ENCODE measurements at regions of chr20 and their contacts with region 1.

Region 1: DNA sequence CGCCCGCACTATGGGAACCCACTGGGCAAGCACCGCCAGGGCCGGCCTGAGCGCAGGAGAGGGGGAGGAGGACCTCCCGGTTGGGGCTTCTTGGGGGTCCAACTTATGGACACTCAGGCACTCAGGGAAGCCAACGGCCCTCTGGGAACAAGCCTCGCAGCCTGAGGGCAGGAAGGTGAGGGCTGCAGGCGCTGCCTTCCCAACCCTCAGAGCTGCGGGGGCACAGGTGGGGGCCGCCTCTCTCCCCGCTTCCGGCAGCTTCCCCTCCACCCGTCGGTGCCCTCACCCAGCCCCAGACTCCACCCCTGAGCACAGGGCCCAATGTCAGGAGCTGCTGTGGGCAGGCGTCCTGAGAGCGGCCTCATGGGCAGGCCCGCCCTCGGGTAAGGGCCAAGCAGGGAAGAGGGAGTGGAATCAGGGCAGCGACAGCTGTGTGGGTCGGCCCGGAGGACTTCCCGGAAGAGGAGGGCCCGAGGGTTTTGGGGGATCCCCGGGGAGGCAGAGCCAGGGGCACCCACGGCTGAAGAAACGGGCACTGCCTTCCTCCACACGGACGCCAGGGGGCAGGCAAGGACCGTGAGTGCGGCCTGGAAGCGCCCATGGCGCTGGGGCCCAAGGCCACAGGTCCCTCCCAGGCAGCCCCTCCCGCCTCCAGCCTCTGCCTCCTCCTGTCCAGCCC is 488 bp upstream of the PTK6 start:
- DNase-seq: peak; percentile 99
- H3K4me3 Mint-ChIP-seq: peak overlapping the region; percentile 73
- H3K27ac Mint-ChIP-seq: peak overlapping the region; percentile 92
- H3K4me1 Mint-ChIP-seq: peaks cover 14% of the 10 kb centered on the region
- H3K27me3 Mint-ChIP-seq: no peaks in the 10 kb centered on the region
- CTCF ChIP-seq: peak; percentile 95

Region 2: DNA sequence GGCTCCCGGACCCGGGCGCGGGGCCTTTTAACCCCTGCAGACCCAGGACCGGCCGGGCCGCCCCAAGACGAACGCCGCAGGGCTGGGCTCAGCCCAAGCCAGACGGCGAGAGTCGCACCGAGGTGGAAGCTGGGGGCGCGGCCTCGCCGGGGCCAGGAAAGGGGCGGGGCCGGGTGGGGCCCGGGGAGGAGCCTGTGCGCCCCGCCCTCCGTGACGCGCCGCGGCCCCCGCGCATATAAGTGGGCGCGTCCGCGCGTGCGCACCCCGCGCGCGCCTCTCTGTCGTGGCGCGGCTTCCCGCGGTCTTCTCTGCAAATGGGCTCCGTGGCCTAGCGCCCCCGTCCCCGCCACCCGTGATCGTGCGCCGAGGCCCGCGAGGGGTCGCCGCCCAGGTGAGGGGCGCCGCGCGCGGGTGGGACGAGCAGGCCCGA is 17.1 kb before region 1 on chr20 and contains the start of gene PPDPF:
- CTCF ChIA-PET with region 1: interaction called, 20 read pairs
- POLR2A ChIA-PET with region 1: interaction called, 124 read pairs
- intact Hi-C with region 1: no loop called
- DNase-seq: peak; percentile 75
- H3K4me3 Mint-ChIP-seq: peak within 1 kb of the TSS; percentile 83
- H3K27ac Mint-ChIP-seq: peak within 1 kb of the TSS; percentile 42
- H3K4me1 Mint-ChIP-seq: no peaks in the 10 kb centered on the region
- H3K27me3 Mint-ChIP-seq: no peaks in the 10 kb centered on the region
- CTCF ChIP-seq: no peak
- total RNA-seq, gene PPDPF: 315 and 355 TPM in 2 replicates

Region 3: DNA sequence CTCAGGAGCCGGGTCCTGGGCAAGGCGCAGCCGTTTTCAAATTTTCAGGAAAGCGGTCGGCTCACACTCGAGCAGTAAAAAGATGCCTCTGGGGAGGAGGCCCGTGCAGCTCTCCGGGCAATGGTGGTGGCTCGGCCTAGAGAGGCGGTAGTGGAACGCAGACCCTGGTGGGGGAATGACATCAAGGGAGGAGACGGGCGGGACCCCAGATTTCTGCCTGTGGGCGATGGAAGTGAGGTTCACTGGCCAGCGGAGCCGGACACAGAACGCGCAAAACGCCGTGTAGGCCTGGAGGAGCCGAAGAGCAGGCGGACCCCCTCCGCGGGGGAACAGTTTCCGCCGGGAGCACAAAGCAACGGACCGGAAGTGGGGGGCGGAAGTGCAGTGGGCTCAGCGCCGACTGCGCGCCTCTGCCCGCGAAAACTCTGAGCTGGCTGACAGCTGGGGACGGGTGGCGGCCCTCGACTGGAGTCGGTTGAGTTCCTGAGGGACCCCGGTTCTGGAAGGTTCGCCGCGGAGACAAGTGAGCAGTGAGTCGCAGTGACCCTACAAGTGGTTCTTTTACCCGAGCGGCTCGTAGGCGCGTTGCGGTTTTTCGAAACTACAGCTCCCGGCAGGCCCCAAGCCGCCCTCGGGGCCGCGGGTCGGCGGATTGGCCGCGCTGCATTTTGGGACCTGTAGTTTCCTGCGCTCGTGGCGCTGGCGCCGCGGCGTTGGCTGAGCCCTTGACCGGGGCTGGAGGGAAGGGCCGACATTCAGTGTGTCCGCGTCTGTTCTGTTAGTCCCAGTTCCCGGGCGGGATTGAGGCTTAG is 120.5 kb after region 1 on chr20 and contains the start of gene RTEL1:
- CTCF ChIA-PET with region 1: interaction called, 3 read pairs
- POLR2A ChIA-PET with region 1: interaction called, 15 read pairs
- intact Hi-C with region 1: no loop called
- DNase-seq: peak; percentile 88
- H3K4me3 Mint-ChIP-seq: peak within 1 kb of the TSS; percentile 88
- H3K27ac Mint-ChIP-seq: peak within 1 kb of the TSS; percentile 97
- H3K4me1 Mint-ChIP-seq: peaks cover 9% of the 10 kb centered on the region
- H3K27me3 Mint-ChIP-seq: no peaks in the 10 kb centered on the region
- CTCF ChIP-seq: no peak
- total RNA-seq, gene RTEL1: 27.9 and 39.2 TPM in 2 replicates

Region 4: DNA sequence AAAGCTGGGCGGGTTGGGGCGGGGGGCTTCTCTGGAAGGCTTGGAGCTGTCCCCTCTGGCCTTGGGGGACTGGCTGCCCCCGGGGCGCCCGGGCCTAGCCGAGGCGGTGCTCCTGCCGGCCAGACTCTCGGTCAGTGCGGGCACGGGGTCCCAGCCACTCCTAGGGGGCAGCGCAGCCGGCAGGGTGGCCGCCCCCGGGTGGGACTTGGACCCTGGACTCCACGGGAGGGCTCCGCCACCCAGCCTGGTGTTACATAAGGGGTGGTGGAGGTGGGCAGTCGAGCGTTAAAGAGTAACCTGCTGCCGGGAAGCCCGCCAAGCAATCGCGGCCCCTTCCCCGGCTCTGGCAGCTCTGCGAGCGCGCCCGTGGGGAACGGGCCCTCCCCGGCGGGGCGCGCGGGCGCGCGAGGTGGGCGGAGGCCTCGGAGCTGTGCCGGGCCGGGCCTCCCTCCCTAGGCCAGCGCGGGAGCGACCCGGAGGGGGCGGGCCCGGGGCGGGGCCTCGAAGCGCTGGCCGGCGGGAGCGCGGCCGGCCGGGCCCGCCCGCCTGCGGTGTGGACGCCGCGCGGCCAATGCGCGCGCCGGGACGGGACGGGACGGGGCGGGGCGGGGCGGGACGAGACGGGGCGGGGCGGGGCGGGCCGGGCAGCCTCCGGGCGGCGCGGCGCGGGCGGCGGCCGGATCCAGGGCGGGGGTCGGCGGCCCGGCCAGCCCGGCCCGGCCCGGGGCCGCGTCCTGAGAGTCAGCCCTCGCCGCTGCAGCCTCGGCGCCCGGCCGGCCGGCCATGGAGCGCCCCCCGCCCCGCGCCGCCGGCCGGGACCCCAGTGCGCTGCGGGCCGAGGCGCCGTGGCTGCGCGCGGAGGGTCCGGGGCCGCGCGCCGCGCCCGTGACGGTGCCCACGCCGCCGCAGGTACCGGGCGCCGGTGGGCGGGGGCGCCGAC is 201.7 kb after region 1 on chr20 and contains the start of gene SLC2A4RG:
- CTCF ChIA-PET with region 1: interaction called, 6 read pairs
- POLR2A ChIA-PET with region 1: interaction called, 14 read pairs
- intact Hi-C with region 1: no loop called
- DNase-seq: peak; percentile 76
- H3K4me3 Mint-ChIP-seq: peak within 1 kb of the TSS; percentile 74
- H3K27ac Mint-ChIP-seq: no peak within 1 kb of the TSS
- H3K4me1 Mint-ChIP-seq: no peaks in the 10 kb centered on the region
- H3K27me3 Mint-ChIP-seq: no peaks in the 10 kb centered on the region
- CTCF ChIP-seq: no peak
- total RNA-seq, gene SLC2A4RG: 85.0 and 105 TPM in 2 replicates

Region 5: DNA sequence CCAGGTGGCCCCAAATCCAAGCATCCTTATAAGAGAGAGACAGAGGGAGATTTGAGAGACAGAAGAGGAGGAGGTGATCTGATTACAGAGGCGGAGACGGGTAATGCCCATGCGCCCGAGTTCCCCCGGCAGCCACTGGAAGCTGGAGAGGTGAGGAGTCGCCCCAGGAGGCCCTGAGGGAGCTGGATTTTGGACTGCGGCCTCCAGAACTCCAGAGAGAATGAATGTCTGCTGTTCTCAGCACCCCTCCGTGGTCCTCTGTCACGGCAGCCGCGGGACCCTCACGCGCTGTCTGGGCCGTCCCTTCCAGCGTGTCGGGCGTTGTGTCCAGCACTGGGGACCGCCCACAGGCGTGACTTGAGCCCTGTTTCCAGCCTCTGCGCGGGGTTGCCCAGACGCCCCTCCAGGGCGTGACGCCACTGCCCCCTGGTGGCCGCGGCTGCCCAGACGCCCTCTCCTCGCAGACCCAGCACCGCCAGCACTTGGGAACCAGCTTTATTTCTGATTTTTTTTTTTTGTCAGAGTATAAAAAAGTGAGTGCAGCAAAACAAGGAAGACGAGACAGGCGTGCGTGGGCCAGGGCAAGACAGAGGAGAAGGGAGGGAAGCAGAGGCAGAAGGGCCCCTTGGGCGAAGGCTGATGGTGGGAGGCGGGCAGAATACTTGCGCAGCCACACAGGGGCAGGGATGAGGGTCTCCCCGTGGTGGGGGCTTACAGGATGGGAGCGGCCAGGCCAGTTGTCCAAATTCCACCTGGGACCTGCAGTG is 436.2 kb after region 1 on chr20:
- CTCF ChIA-PET with region 1: interaction called, 24 read pairs
- POLR2A ChIA-PET with region 1: interaction called, 30 read pairs
- intact Hi-C with region 1: loop called (anchors 1 kb)
- DNase-seq: peak; percentile 76
- H3K4me3 Mint-ChIP-seq: peak overlapping the region; percentile 61
- H3K27ac Mint-ChIP-seq: no peak overlapping the region
- H3K4me1 Mint-ChIP-seq: peaks cover 31% of the 10 kb centered on the region
- H3K27me3 Mint-ChIP-seq: no peaks in the 10 kb centered on the region
- CTCF ChIP-seq: peak; percentile 98

Measured in MCF 10A (cell line).